CD8-positive, alpha-beta memory T cell (primary cell): ENCODE measurements at regions of chr10 and their contacts with region 1.

Region 1: DNA sequence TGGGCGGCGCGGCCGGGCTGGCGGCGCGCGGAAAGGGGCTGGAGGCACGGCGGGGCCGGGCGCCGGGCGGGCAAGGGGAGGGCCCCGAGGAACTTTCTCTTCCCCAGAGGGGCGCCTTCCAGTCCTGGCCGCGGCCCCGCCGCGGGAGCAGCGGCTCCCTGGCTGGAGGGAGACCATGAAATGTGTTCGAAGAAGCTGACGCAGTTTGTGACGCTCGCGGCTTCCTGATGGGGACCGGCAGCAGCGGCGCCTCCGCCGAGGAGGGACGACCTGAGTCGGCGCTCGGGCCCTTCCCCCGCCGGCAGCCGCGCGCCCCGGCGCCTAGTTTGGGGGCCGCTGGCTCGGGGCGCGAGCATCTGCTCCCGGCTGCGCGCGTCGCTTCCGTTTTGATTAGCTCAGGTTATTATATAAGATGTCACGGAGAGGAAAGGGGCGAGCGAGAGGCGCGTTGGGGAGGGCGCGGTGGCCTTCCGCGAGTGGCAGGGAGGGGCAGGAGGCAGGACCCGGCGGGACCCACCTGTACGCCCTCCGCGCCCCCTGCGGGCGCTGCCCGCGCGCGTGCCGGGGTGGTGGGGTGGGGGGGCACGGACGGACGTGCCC is 57.1 kb upstream of the PCGF5 start:
- DNase-seq: peak; percentile 79 to 93 (median 90)
- H3K4me3 ChIP-seq: peak overlapping the region; percentile 71
- H3K4me3 Mint-ChIP-seq: peak overlapping the region; percentile 88 to 94 (median 91)
- H3K27ac ChIP-seq: peak overlapping the region; percentile 91
- H3K27ac Mint-ChIP-seq: peak overlapping the region; percentile 96 to 99 (median 98)
- H3K4me1 ChIP-seq: peaks cover 36% of the 10 kb centered on the region
- H3K4me1 Mint-ChIP-seq: peaks cover 52 to 75% (median 61%) of the 10 kb centered on the region in 3 donors
- H3K27me3 ChIP-seq: no peaks in the 10 kb centered on the region
- H3K27me3 Mint-ChIP-seq: peaks cover 0 to 1% of the 10 kb centered on the region in 2 donors

Region 2: GRCh38 chr10:90960355-90960814 is 203.0 kb before region 1 on chr10:
- CTCF ChIA-PET with region 1: no interaction called
- POLR2A ChIA-PET with region 1: no interaction called
- DNase-seq: no peak
- H3K4me3 ChIP-seq: no peak overlapping the region
- H3K4me3 Mint-ChIP-seq: no peak overlapping the region
- H3K27ac ChIP-seq: no peak overlapping the region
- H3K27ac Mint-ChIP-seq: no peak overlapping the region
- H3K4me1 ChIP-seq: no peaks in the 10 kb centered on the region
- H3K4me1 Mint-ChIP-seq: no peaks in the 10 kb centered on the region
- H3K27me3 ChIP-seq: no peaks in the 10 kb centered on the region
- H3K27me3 Mint-ChIP-seq: peaks cover 3 to 18% of the 10 kb centered on the region in 2 donors

Region 3: GRCh38 chr10:91117505-91117904 is 45.9 kb before region 1 on chr10:
- CTCF ChIA-PET with region 1: no interaction called
- POLR2A ChIA-PET with region 1: no interaction called
- DNase-seq: no peak
- H3K4me3 ChIP-seq: no peak overlapping the region
- H3K4me3 Mint-ChIP-seq: no peak overlapping the region
- H3K27ac ChIP-seq: no peak overlapping the region
- H3K27ac Mint-ChIP-seq: no peak overlapping the region
- H3K4me1 ChIP-seq: no peaks in the 10 kb centered on the region
- H3K4me1 Mint-ChIP-seq: no peaks in the 10 kb centered on the region
- H3K27me3 ChIP-seq: no peaks in the 10 kb centered on the region
- H3K27me3 Mint-ChIP-seq: peaks cover 0 to 2% of the 10 kb centered on the region in 2 donors

Region 4: GRCh38 chr10:91137822-91138221 is 25.5 kb before region 1 on chr10:
- CTCF ChIA-PET with region 1: no interaction called
- POLR2A ChIA-PET with region 1: no interaction called
- DNase-seq: no peak
- H3K4me3 ChIP-seq: no peak overlapping the region
- H3K4me3 Mint-ChIP-seq: no peak overlapping the region
- H3K27ac ChIP-seq: no peak overlapping the region
- H3K27ac Mint-ChIP-seq: peak overlapping the region in 1 of 8 donors; percentile 15
- H3K4me1 ChIP-seq: no peaks in the 10 kb centered on the region
- H3K4me1 Mint-ChIP-seq: no peaks in the 10 kb centered on the region
- H3K27me3 ChIP-seq: peaks cover 5% of the 10 kb centered on the region
- H3K27me3 Mint-ChIP-seq: peaks cover 3 to 18% of the 10 kb centered on the region in 2 donors

Region 5: GRCh38 chr10:91201213-91201996 is 38.0 kb after region 1 on chr10:
- CTCF ChIA-PET with region 1: interaction called, 10 read pairs
- POLR2A ChIA-PET with region 1: interaction called, 24 read pairs
- DNase-seq: peak in 2 of 5 donors; percentile 57 to 70
- H3K4me3 ChIP-seq: peak overlapping the region; percentile 3
- H3K4me3 Mint-ChIP-seq: peak overlapping the region; percentile 40 to 76 (median 67)
- H3K27ac ChIP-seq: peak overlapping the region; percentile 25
- H3K27ac Mint-ChIP-seq: peak overlapping the region; percentile 68 to 97 (median 86)
- H3K4me1 ChIP-seq: peaks cover 68% of the 10 kb centered on the region
- H3K4me1 Mint-ChIP-seq: peaks cover 80 to 93% (median 92%) of the 10 kb centered on the region in 3 donors
- H3K27me3 ChIP-seq: no peaks in the 10 kb centered on the region
- H3K27me3 Mint-ChIP-seq: no peaks in the 10 kb centered on the region

Region 6: GRCh38 chr10:91220194-91220953 is 57.0 kb after region 1 on chr10 and contains the start of gene PCGF5:
- CTCF ChIA-PET with region 1: interaction called, 8 read pairs
- POLR2A ChIA-PET with region 1: interaction called, 52 read pairs
- DNase-seq: peak; percentile 89 to 94 (median 92)
- H3K4me3 ChIP-seq: peak within 1 kb of the TSS; percentile 72
- H3K4me3 Mint-ChIP-seq: peak within 1 kb of the TSS; percentile 89 to 94 (median 90)
- H3K27ac ChIP-seq: peak within 1 kb of the TSS; percentile 83
- H3K27ac Mint-ChIP-seq: peak within 1 kb of the TSS; percentile 62 to 98 (median 94)
- H3K4me1 ChIP-seq: peaks cover 46% of the 10 kb centered on the region
- H3K4me1 Mint-ChIP-seq: peaks cover 43 to 66% (median 65%) of the 10 kb centered on the region in 3 donors
- H3K27me3 ChIP-seq: no peaks in the 10 kb centered on the region
- H3K27me3 Mint-ChIP-seq: no peaks in the 10 kb centered on the region
- total RNA-seq, gene PCGF5: 57.0 to 58.0 TPM